Thyroid gland (tissue), 4 donors: ENCODE measurements at regions of chr5 and their contacts with region 1.

Region 1: DNA sequence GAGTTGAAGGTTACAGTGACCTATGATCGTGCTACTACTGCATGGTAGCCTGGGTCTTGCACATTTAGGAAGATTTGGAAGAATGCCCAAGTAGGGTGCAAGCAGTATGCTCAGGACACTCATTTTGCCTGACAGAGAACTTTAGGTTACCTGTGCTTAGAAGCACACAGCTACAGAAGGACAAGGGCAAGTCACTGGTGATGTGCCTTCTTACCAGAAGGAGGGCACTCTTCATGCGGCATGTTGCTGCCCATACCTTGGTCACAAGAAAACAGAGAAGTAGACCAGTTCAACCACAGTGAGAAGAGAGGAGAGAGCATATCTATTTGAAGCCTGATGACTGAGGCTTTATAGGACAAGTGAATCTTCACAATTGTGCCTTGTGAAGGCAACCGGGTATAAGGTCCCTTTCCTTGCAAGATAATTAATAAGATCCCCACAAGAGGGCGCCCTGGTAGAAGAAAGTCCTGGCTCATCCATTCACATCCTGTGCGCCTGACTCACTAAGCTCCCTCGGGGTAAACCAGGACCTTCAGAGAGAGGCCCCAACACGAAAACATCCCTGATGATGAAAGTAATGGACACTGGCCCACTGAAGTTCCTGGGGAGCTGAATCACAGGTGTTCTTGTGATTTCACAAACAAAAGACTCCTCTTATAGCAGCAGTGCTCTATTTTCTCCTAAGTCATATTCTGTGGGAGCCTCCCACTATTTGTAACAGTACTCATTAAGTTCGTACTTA is 38.1 kb upstream of the STARD4 start:
- DNase-seq: peak; percentile 60 to 72
- H3K4me3 ChIP-seq: no peak overlapping the region
- H3K27ac ChIP-seq: no peak overlapping the region
- H3K4me1 ChIP-seq: peaks cover 0 to 3% of the 10 kb centered on the region in 2 donors
- H3K27me3 ChIP-seq: no peaks in the 10 kb centered on the region
- CTCF ChIP-seq: peak; percentile 36 to 72 (median 54)
- POLR2A ChIP-seq: no peak

Region 2: DNA sequence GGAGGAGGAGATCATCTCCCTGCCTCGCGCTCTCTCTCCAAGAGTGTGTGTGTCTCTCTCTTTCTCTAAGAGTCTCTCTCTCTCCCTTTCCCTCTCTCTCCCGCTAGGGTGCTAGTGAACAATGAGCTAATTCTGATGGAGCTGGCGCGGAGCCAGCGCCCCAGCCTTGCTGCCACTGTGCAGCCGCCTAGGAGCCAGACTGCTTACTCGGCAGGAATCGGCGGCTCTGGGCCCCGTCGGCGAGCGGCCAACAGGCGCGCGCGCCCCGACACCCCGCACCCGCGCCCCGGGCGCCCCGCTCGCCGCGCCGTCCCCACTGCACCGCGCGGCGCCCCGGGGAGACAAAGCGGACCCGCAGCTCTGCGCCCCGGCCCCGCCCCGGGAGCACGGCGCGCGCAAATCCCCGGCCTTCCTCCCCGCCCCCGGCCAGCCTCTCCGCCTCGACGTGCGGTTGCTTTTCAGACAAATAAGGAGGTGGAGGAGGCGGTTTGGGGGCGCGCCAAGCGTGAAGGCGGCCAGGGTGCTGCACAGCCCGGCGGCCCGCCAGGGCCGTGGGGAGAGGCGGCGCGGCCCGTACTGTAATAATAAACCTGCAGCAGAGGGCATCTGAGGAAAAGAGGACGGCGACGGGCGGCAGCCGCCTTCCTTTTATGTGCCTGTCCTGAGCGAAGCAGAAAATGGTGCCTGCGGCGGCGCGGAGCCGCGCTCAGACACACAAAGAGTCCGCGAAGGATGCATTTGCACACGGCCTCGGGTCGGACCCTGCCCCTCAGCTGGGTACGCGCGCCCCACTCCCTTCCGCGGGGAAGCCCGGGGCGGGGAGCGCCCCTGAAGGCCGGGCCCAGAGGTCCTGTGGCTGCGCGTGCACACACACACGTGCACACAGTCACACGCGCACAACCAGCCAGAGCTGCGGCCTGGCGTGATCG is 207.2 kb after region 1 on chr5:
- intact Hi-C with region 1: loop called (anchors 10 kb)
- DNase-seq: peak; percentile 92 to 95
- H3K4me3 ChIP-seq: peak overlapping the region; percentile 19 to 47 (median 41)
- H3K27ac ChIP-seq: peak overlapping the region; percentile 83 to 91 (median 88)
- H3K4me1 ChIP-seq: peaks cover 10 to 15% of the 10 kb centered on the region in 2 donors
- H3K27me3 ChIP-seq: no peaks in the 10 kb centered on the region
- CTCF ChIP-seq: peak in 4 of 6 experiments; percentile 45 to 63 (median 56)
- POLR2A ChIP-seq: peak in 1 of 2 donors; percentile 69

Region 3: GRCh38 chr5:111781200-111781599 is 230.8 kb after region 1 on chr5:
- intact Hi-C with region 1: no loop called
- DNase-seq: peak; percentile 9 to 10
- H3K4me3 ChIP-seq: no peak overlapping the region
- H3K27ac ChIP-seq: no peak overlapping the region
- H3K4me1 ChIP-seq: no peaks in the 10 kb centered on the region
- H3K27me3 ChIP-seq: no peaks in the 10 kb centered on the region
- CTCF ChIP-seq: no peak
- POLR2A ChIP-seq: no peak